ENCODE measurements at regions of chr9 and their contacts with region 1.

Region 1: GRCh38 chr9:27333241-27334052 is 36.5 kb upstream of the EQTN start:
- DNase-seq: peak; percentile 64
- H3K4me3 Mint-ChIP-seq: no peak overlapping the region
- H3K27ac Mint-ChIP-seq: no peak overlapping the region
- H3K4me1 Mint-ChIP-seq: peaks cover 15% of the 10 kb centered on the region
- H3K27me3 Mint-ChIP-seq: peaks cover 15% of the 10 kb centered on the region

Region 2: DNA sequence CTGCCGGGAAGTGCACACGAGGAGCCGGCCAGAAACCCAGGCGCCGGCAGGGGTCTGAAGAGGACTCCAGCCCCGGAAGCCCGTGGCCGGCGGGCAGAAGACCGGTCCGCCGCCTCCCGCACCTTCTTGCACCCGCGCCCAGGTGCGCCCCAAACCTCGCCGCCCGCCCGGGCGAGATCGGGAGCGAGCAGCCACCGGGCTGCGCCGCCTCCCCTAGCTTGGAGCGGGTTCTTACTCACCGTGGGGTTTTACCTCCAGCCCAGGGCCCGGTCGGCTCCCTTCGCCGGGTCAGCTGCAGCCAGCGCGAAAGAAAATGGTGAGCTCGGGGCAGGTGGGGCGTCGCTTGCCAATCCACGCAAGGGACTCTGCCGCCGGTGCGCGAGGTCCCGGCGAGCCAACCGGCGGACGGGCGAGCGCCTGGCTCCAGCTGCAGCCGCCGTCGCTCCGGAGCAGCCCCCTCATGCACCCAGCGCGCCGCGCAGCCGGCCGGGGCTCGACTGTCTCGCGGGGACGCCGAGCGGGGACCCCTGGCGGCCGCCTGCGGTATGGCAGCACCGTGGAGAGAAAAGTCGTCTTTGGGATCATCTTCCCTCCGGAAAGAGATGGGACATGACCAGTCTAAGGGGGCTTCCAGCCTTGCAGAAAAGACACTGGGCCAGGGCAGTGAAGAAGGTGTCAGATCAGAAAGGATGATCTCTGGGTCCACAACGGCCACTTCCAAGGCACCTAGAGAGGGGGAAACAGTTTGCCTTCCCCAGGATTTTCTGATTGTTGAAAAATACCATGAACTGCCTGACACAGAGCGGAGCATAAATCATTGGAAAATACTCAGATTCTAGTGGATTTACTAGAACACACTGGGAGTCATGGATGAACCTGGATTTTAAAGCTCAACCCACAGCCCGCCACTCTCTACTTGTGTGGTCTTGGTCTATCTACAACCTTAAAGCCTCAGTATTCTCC is 196.2 kb after region 1 on chr9 and contains the start of gene MOB3B:
- CTCF ChIA-PET with region 1: interaction called, 51 read pairs
- DNase-seq: peak; percentile 82
- H3K4me3 Mint-ChIP-seq: peak within 1 kb of the TSS; percentile 83
- H3K27ac Mint-ChIP-seq: no peak within 1 kb of the TSS
- H3K4me1 Mint-ChIP-seq: peaks cover 20% of the 10 kb centered on the region
- H3K27me3 Mint-ChIP-seq: peaks cover 36% of the 10 kb centered on the region

Region 3: DNA sequence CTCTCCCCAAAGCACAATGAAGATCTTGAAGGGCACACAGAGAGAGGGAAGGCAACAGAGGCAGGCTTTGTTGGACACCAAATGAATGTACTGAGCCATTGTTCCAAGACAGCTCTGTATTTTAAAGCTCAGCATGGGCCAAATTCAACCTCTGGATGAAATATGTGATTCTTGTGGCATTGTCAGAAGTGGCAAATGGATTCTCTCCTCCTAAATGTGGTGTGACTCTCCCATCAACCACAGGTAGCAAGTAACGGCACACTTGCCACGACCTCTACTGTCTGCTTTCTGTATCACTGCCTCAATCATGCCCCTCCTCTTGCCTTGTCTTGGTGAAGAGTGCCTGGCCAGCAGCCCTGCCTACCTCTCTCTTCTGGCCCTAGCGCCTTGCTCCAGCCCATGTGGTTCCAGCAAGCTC is 202.3 kb after region 1 on chr9:
- CTCF ChIA-PET with region 1: interaction called, 51 read pairs
- DNase-seq: no peak
- H3K4me3 Mint-ChIP-seq: no peak overlapping the region
- H3K27ac Mint-ChIP-seq: no peak overlapping the region
- H3K4me1 Mint-ChIP-seq: peaks cover 9% of the 10 kb centered on the region
- H3K27me3 Mint-ChIP-seq: no peaks in the 10 kb centered on the region

Region 4: GRCh38 chr9:27548055-27548741 is 214.8 kb after region 1 on chr9:
- CTCF ChIA-PET with region 1: interaction called, 57 read pairs
- DNase-seq: no peak
- H3K4me3 Mint-ChIP-seq: no peak overlapping the region
- H3K27ac Mint-ChIP-seq: no peak overlapping the region
- H3K4me1 Mint-ChIP-seq: no peaks in the 10 kb centered on the region
- H3K27me3 Mint-ChIP-seq: no peaks in the 10 kb centered on the region